GM13977 (cell line): ENCODE measurements at regions of chr16 and their contacts with region 1.

Region 1: DNA sequence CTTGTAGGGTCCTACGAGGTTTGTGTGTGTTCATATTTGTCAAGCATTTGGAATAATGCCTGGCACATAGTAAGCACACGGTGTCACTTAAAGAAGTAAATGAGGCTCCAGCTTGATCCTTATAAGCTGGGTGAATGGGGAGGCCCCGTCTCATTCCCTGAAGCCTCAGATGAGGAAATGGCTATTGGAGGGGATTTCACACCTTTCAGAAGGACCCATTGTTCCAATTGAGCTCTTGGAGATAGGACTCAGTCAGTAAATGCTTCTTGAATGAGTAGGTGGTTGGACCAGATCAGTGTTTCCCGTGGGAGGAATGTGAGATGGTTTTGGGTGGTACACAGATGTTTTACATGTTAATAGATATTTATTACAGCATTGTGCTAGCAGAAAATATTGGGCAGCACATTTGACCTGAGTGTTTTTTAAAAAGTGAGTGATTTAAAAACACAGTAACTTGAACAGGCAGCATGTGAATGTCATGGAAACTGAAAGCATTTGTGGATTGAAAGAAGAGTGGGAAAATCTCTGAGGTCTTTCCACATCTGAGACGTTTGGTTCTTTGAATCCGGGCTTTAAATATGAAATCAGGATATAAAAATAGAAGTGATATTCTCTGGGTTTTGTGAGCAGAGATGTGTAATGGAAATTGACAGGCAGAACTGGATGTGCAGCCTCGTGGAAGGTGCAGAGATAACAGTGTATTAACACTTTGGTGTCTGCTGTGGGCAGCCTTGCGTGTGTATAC is 36.4 kb upstream of the ARHGAP17 start:
- DNase-seq: no peak
- CTCF ChIP-seq: no peak

Region 2: GRCh38 chr16:24853830-24854229 is 197.7 kb before region 1 on chr16:
- in situ Hi-C with region 1: no loop called
- DNase-seq: no peak
- CTCF ChIP-seq: no peak

Region 3: GRCh38 chr16:25126820-25127232 is 75.2 kb after region 1 on chr16:
- in situ Hi-C with region 1: loop called (anchors 5 kb)
- DNase-seq: no peak
- CTCF ChIP-seq: peak; percentile 46

Region 4: DNA sequence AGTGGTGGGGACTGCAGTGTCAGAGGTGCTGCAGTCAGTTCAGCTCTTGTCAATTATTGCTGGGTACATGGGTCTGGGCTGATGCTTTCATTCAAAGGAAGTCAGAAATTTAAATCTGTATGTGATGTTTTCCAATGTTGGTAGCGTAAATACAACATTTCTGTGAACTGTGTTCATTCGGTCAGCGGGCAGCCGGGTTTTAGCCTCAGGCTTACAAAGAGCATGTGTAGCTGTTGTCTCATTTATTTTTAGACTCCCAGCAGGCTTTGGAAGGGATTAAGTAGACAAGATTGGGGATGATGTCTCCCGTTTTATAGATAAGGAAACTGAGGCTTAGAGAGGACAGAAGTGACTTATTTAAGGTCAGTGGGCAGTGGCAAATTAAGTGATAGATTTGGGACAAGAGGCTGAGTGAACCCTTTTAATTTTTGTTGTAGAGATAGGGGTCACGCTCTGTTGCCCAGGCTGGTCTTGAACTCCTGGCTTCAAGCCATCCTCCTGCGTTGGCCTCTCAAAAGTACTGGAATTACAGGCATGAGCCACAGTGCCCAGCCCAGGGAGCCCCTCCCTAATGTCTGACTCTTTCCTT is 173.2 kb after region 1 on chr16:
- in situ Hi-C with region 1: loop called (anchors 10 kb)
- DNase-seq: no peak
- CTCF ChIP-seq: no peak

Region 5: DNA sequence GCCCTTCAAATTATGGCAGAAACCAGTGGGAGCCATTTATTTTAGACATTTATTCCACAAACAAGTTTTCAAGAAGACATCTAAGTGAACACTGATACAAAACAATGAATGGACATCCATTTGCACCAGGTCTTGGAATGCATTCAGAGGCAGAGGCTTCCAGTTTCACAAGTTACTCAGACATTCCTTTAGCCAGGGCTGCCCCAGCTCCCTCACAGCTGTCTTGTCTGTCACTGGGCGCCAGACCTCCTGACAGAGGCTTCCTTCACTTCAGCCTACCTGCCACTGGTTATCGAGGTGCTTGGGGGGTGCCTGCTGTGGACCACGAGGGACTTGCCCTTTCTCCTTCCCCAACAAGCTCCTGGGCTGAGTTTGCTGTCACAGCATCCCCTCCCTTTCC is 184.4 kb after region 1 on chr16:
- in situ Hi-C with region 1: no loop called
- DNase-seq: no peak
- CTCF ChIP-seq: no peak

Region 6: DNA sequence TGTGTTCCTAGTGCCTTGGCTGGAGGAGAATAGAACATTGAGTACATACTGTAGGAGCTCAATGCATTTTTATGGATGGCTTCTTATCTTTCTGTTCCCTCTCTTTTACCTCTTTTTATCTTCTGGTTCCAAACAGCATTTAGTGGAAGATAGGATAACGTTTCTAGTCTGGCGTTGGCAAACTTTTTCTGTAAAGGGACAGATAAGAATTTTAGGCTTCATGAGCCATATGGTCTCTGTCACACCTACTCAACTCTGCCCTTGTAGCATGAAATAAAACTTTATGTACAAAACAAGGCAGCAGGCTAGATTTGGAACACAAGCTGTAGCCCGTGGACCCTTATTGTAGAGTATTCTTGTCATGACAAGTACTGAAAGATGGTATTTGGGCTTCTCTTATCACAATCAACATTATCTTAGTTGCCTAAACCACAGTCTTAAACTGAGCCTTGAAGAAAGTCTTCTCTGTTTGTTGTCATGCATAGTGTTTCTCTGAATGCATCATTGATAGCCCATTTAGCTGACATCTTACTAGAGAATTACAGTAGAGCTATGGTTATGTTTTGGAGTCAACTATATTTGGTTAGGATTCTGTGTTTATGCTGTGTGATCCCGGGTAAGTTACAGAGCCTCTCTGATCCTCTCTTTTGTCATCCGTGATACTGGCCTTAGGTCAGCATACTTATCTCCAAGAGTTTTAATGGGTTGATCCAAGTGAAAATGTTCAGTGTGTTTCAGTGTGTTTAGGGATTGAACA is 720.4 kb after region 1 on chr16:
- in situ Hi-C with region 1: no loop called
- DNase-seq: no peak
- CTCF ChIP-seq: no peak